ENCODE measurements at regions of chr4 and their contacts with region 1.

Region 1: DNA sequence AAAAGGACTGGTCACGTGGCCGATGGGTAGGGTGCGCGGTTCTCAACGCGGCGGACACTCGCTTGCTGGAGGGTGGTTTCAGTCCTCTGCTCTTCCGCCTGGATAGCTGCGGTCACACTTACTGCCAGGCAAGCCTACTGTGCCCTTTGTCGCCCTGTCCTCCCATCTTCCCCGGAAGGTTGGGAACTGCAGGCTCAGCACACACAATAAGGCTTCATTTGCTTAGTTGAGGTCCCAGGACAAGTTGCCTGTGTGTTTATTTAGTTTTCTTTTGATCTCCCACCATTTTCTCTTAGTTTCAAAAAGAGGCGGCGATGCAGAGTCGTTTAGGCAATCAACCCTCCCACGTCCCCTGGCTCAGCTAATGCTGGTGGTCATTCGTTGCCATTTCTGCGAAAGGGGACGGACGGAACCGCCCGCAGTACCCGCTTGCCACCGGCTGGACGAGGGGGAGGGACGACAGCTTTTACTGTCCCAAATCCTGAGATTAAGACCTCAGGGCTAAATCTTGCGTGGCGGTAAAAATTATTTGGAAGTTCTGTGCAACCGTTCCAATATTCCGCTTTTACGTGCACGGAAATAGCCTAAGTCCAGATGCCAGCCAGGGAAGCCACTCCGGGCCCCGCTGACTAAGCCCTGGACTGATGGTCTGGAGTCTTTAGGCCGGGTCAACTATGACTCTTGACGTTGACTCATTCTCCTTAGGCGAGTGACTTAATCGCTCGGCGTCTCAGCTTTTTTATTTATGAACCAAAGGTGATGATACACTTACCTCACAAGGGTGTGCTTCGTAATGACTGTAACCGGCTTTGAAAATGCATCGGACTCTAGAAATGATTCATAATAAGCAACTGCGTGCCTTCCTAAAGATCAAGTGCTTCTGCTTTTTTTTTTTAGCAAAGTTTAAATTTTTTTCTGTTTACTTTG is 671 bp upstream of the EIF4E start:
- DNase-seq: peak; percentile 74 to 80 (median 80)
- ATAC-seq: peak; percentile 78 to 80
- H3K4me3 ChIP-seq: peak overlapping the region; percentile 79
- H3K27ac ChIP-seq: peak overlapping the region; percentile 98
- H3K4me1 ChIP-seq: no peaks in the 10 kb centered on the region
- H3K27me3 ChIP-seq: no peaks in the 10 kb centered on the region

Region 2: DNA sequence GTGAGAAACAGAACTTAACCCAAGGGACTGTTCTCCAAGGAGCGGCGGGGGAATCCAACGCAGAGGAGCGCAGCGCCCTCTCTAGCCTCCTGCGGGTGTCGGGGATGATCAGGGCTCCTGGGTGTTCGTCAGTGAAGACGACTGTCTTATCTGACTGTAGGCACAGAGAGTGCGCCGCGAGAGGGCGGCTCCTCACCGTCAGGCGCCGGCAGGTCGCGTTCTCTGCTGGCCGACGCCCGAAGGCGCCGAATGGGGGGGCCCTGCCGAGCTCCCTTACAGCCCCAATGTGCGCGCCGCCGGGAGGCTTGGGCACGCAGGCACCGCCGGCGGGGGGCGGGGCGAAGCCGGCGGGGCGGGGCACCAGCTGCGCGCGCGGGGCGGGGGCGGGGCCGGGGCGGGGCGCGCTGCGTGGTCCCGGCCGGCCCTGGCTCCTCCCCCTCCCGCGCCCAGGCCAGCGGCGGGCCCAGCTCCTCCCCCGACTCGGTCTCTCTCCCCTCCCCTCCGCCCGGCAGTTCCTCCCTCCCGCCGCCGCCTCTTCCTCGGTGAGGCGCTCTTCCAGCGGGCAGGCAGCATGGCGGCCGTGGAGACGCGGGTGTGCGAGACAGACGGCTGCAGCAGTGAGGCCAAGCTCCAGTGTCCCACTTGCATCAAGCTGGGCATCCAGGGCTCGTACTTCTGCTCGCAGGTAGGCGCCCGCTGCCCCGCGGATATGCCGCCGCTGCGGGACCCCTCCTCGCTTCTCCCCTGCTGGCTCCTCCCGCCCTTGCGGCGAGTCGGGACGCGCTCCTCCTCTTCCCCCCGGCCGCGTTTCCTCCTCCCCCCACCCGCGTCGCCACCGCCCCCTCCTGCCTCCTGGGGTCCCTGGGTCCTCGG is 65.8 kb after region 1 on chr4 and contains the start of gene METAP1:
- intact Hi-C with region 1: loop called in 1 of 4 experiments (anchors 10 kb)
- DNase-seq: peak; percentile 94 to 98 (median 97)
- ATAC-seq: peak; percentile 97
- H3K4me3 ChIP-seq: peak within 1 kb of the TSS; percentile 95
- H3K27ac ChIP-seq: peak within 1 kb of the TSS; percentile 93
- H3K4me1 ChIP-seq: no peaks in the 10 kb centered on the region
- H3K27me3 ChIP-seq: no peaks in the 10 kb centered on the region
- total RNA-seq, gene METAP1: 37.0 to 53.2 (median 40.8) TPM

Region 3: GRCh38 chr4:99655308-99656081 is 725.9 kb after region 1 on chr4:
- intact Hi-C with region 1: no loop called
- DNase-seq: peak; percentile 48 to 77 (median 76)
- ATAC-seq: peak; percentile 58 to 63
- H3K4me3 ChIP-seq: no peak overlapping the region
- H3K27ac ChIP-seq: peak overlapping the region; percentile 82
- H3K4me1 ChIP-seq: peaks cover 3% of the 10 kb centered on the region
- H3K27me3 ChIP-seq: no peaks in the 10 kb centered on the region

Measured in right cardiac atrium (tissue), 5 donors.